Activated CD4-positive, alpha-beta memory T cell treated with anti-CD3 and anti-CD28 coated beads for 36 hours (primary cell): ENCODE measurements at regions of chr14 and their contacts with region 1.

Region 1: GRCh38 chr14:76050797-76051392 is 65.3 kb downstream of the IFT43 start:
- DNase-seq: peak; percentile 65
- H3K4me3 Mint-ChIP-seq: no peak overlapping the region
- H3K27ac Mint-ChIP-seq: no peak overlapping the region
- H3K4me1 Mint-ChIP-seq: no peaks in the 10 kb centered on the region
- H3K27me3 Mint-ChIP-seq: no peaks in the 10 kb centered on the region

Region 2: DNA sequence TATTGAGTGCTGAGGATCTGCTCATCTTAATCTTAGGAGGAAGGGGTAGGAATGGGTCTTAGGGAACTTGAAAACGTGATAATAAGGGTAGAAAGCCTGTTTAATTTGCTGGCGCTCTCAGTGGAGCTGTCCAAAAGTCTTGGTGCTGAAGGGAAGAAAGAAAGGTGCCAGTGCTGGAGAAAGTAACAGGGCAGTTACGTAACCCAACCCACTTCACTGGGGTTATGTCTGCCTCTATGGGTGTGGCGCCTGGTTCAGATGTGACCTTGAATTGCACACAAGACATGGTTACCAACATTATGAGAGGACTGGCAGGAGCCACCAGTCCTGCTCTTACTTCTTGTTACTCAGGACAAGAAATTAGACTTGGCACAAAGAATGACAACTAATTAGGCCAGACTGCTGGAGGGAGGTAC is 82.2 kb after region 1 on chr14:
- CTCF ChIA-PET with region 1: no interaction called
- POLR2A ChIA-PET with region 1: no interaction called
- intact Hi-C with region 1: no loop called
- DNase-seq: peak; percentile 13
- H3K4me3 Mint-ChIP-seq: no peak overlapping the region
- H3K27ac Mint-ChIP-seq: no peak overlapping the region
- H3K4me1 Mint-ChIP-seq: peaks cover 6% of the 10 kb centered on the region
- H3K27me3 Mint-ChIP-seq: peaks cover 56% of the 10 kb centered on the region

Region 3: DNA sequence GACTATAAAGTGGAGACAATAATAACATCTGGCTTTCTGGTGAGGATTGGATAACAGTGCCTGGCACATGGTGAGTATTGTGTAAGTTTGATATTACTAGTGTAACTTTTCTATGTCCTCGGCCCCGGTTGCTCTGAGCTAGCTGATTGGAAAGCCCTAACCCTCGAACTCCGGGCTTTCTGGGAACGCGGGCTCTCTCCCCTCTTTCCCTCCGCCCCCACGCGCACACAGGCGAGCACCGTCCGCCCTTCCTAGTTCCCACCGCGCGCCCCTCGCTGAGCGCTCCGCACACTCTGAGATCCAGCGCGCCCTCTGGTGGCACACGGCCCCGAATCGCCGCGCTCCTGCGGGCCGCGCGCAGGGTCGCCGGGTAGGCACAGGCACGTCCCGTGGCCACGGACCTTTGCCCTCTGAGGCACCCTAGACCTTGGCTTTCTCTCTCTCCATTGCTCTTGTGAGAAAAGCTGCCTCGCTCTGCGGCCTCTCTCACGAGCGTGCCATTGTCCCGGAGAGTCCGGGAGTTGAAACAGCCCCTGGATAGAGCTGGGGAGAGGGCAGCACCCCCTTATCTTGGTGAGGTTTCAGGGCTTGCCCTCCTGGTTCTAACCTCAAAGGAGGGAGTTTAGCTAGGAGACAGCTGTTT is 301.9 kb after region 1 on chr14:
- CTCF ChIA-PET with region 1: interaction called, 112 read pairs
- POLR2A ChIA-PET with region 1: no interaction called
- intact Hi-C with region 1: loop called (anchors 1 kb)
- DNase-seq: peak; percentile 61
- H3K4me3 Mint-ChIP-seq: no peak overlapping the region
- H3K27ac Mint-ChIP-seq: no peak overlapping the region
- H3K4me1 Mint-ChIP-seq: peaks cover 3% of the 10 kb centered on the region
- H3K27me3 Mint-ChIP-seq: peaks cover 14% of the 10 kb centered on the region

Region 4: DNA sequence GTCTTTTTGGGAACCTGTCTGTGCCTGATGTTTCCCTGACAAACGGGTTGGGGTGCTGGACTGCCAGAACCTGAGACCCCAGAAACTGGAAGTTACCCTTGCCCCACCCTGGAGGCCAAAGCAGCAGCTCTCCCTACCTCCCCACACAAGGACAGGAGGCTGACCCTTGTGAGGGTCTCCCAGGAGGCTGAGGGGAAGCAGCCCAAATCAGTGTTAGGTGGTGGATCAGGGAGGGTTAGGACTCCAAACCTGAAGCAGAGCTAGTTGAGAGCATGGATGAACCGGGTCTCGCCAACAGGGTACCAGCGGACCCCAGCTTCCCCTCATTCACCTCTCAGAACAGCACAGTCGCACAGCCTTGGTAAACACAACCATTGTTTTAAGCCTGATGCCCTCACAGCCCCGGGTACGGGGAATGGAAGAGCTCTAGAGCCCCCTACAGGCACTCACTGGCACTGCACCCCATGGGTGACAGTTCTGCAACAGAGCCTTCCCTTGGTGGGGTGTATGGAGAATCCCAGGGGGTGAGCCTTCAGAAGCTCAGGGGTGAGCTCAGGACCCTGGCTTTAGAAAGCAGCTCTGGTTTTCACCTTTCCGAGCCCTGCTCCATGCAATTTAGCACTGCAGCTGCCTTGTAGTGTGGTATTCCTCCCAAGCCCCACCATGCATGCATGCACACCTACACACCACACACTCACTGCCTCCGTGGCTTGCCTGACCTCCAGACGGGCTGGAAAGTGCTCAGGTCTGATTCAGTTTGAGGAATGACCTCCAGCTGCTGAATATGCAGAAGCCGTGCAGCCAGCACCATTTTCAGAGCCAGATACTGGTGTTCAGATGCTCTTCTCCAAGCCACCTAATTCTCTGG is 336.3 kb after region 1 on chr14:
- CTCF ChIA-PET with region 1: interaction called, 25 read pairs
- POLR2A ChIA-PET with region 1: no interaction called
- intact Hi-C with region 1: loop called (anchors 1 kb)
- DNase-seq: peak; percentile 76
- H3K4me3 Mint-ChIP-seq: no peak overlapping the region
- H3K27ac Mint-ChIP-seq: no peak overlapping the region
- H3K4me1 Mint-ChIP-seq: no peaks in the 10 kb centered on the region
- H3K27me3 Mint-ChIP-seq: peaks cover 37% of the 10 kb centered on the region